ENCODE measurements at regions of chr9 and their contacts with region 1.

Region 1: DNA sequence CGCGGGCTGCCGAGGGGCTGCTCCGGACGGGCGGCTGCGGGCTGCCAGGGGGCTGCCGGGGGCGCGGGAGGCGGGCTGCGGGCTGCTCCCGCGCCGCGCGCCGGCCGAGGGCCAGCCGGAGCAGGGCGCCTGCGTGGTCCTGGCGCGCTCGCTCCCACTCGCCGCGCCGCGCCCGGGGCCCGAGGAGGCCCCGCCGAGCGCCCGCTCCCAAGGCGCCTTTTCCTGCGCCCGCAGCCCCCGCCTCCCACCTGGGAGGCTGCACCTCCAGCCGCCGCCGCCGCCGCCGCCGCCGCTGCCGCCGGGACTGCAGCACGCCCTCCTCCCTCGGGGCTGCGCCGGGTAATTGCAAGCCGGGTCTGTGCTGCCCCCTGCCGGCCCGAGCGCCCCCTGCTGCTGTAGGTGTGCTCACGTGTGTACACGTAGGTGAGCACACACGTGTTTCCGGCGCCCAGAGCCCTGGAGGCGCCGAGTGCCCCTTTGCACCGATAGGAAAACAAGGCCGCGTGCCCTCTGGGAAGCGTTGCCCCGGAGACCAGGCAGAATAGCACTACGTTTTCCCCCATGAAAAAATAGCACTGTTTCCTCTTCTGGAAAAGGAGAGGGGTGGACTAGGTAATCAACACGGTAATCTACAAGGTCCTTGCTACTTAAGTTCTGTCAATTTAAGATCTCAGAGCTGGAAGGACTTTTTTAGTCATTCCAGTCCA is at the start of gene EPB41L4B:
- DNase-seq: peak; percentile 88
- H3K4me3 Mint-ChIP-seq: peak within 1 kb of the TSS; percentile 84
- H3K27ac Mint-ChIP-seq: peak within 1 kb of the TSS; percentile 67
- H3K4me1 Mint-ChIP-seq: peaks cover 41% of the 10 kb centered on the region
- H3K27me3 Mint-ChIP-seq: no peaks in the 10 kb centered on the region
- CTCF ChIP-seq: peak; percentile 96
- total RNA-seq, gene EPB41L4B: 20.2 and 23.7 TPM in 2 replicates

Region 2: DNA sequence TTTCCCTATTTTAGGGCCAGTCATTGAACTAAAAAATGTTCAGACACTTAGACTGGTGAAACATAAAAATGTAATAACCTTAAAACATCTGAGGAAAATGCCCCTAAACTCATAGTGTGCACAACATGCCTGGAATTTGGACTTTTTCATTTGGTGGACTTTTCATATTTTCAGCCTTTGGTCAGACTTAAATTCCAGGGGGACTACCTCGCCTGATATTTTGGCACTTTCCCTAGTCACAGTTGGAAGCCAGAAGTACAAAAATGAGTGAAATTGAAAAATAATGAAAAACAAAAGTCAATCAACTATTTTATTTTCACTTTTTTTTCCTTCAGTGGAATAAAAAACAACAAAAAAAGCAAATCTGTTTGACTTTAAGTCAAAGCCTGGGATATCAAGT is 721.3 kb before region 1 on chr9:
- CTCF ChIA-PET with region 1: no interaction called
- POLR2A ChIA-PET with region 1: no interaction called
- intact Hi-C with region 1: no loop called
- DNase-seq: no peak
- H3K4me3 Mint-ChIP-seq: no peak overlapping the region
- H3K27ac Mint-ChIP-seq: no peak overlapping the region
- H3K4me1 Mint-ChIP-seq: peaks cover 10% of the 10 kb centered on the region
- H3K27me3 Mint-ChIP-seq: no peaks in the 10 kb centered on the region
- CTCF ChIP-seq: no peak

Region 3: DNA sequence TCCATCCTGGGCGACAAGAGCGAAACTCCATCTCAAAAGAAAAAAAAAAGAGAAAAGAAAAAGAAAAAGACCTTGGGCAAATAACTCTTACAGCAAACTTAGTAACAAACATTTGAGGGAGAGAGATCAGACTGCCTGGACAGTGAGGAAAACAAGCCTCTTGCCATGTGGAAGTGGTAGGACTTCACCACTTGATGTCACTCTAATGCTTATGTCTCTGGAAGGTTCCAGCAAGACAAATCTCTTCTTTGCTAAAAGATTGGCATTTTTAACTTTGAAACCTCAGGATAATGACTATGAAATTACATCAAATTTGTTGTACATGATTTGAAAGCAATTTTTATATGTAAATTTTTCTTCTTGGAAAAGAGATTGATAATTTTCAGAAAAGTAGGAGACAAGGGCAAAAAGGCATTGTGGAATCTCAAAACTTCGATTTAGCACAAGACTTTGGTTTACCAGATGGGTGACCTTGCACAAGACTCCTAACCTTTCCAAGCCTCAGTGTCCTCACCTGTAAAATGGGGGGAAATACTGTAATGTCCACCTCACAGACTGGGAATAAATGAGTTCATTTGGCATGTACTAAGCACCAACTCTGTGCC is 470.5 kb before region 1 on chr9:
- CTCF ChIA-PET with region 1: no interaction called
- POLR2A ChIA-PET with region 1: no interaction called
- intact Hi-C with region 1: loop called (anchors 10 kb)
- DNase-seq: peak; percentile 60
- H3K4me3 Mint-ChIP-seq: no peak overlapping the region
- H3K27ac Mint-ChIP-seq: no peak overlapping the region
- H3K4me1 Mint-ChIP-seq: no peaks in the 10 kb centered on the region
- H3K27me3 Mint-ChIP-seq: no peaks in the 10 kb centered on the region
- CTCF ChIP-seq: peak; percentile 52

Region 4: DNA sequence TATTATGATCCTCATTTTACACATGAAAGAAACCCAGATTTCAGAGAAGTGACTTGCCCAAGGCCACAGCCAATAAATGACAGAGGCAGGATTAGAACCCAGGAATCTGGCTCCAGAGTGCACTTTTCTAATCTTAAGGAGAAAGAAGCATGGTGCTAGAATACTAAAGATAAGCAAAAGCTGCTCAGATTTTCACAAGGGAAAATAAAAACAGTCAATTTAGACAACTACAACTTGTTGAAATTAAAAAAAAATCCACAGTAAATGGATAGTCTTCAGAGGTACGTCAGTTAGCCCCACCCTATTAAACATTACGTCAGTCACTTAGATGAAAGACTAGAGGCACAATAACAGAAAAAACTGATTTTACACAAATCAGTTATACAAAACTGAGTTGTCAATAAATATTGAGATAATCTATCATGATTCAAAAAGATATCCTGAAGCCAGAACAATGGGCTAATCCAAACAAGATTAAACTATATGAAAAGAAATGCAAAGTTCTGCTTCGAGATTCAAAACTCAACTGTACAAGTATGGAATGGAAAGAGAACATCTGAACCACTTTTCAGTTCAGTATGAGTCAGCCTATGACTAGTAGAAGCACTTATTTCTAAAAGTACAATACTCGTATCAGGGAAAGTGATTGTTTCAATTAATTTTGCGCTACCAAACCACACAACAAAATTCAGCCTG is 210.4 kb before region 1 on chr9:
- CTCF ChIA-PET with region 1: interaction called, 4 read pairs
- POLR2A ChIA-PET with region 1: interaction called, 3 read pairs
- intact Hi-C with region 1: loop called (anchors 5 kb)
- DNase-seq: peak; percentile 61
- H3K4me3 Mint-ChIP-seq: peak overlapping the region; percentile 59
- H3K27ac Mint-ChIP-seq: peak overlapping the region; percentile 95
- H3K4me1 Mint-ChIP-seq: peaks cover 54% of the 10 kb centered on the region
- H3K27me3 Mint-ChIP-seq: no peaks in the 10 kb centered on the region
- CTCF ChIP-seq: no peak

Region 5: GRCh38 chr9:109192732-109193361 is 128.0 kb before region 1 on chr9:
- CTCF ChIA-PET with region 1: interaction called, 3 read pairs
- POLR2A ChIA-PET with region 1: interaction called, 3 read pairs
- intact Hi-C with region 1: loop called (anchors 1 kb)
- DNase-seq: peak; percentile 63
- H3K4me3 Mint-ChIP-seq: no peak overlapping the region
- H3K27ac Mint-ChIP-seq: no peak overlapping the region
- H3K4me1 Mint-ChIP-seq: no peaks in the 10 kb centered on the region
- H3K27me3 Mint-ChIP-seq: no peaks in the 10 kb centered on the region
- CTCF ChIP-seq: peak; percentile 46

Region 6: DNA sequence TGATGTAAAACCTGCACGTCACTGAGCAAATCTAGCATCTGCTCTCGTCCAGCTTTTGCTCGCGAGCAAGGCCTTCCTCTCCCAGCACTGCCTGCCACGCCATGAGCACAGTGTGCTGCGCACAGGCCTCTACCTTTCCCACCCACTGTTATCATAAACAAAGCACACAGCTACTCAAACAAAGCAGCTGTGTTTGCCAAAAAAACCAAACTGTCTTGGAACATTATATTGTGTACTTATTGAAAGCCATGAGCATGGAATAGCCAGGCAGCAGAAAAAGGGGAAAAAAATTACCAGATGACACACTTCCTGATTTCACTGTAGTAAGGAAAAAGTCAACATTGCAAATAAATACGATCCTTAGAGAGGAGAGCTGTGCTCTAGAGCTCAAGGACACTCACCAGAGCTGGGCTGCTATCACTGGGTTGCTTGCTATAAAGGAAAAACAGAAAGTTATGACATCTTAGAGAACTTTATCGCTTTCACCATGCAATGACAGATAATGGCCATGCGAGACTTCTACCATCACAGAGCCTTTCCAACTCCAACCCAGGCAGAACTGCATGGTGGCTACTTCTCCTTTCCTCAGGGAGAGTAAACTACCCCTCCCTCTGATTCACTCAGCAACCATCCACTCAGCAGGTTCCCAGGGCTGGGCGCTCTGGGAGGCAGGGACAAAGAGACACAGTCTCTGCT is 69.7 kb before region 1 on chr9:
- CTCF ChIA-PET with region 1: interaction called, 6 read pairs
- POLR2A ChIA-PET with region 1: interaction called, 20 read pairs
- intact Hi-C with region 1: loop called (anchors 2 kb)
- DNase-seq: peak; percentile 84
- H3K4me3 Mint-ChIP-seq: peak overlapping the region; percentile 59
- H3K27ac Mint-ChIP-seq: peak overlapping the region; percentile 96
- H3K4me1 Mint-ChIP-seq: peaks cover 50% of the 10 kb centered on the region
- H3K27me3 Mint-ChIP-seq: no peaks in the 10 kb centered on the region
- CTCF ChIP-seq: no peak

Region 7: DNA sequence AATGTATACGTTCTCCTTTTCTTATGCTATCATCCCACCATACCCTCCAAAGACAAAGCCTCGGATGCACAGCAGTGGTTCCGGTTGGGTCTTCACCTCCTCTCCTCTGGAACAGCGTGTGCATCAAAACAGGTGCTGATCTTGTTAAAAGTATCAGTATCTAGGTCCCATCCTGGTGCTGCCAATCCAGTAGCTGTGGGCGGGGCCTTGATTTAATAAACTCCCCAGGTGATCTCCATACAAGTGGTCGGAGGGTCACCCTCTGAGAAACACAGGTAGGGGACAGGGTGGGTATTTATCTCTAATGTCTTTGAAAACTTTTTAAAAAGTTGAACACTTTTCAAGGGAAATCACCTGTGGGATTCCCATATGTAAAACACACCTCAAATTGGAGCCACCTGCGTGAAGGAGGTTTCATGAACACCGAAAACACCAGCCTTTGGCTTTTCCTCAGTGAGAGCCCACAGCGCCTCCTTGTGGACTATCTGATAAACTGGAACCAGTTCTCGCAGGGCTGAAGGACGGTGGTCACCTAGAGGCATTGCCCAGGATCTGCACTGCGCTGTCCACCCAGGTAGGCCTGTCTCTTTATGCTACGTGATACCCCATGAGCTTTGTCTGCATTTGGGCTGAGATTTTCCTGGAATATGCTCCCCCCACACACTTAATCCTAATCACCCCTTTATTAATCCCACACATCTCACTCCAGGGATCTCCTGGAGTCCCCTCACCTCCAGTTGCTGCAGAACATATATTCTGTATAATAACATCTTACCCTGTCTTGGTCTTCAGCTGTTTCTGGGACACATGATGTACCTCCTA is 80.5 kb after region 1 on chr9:
- CTCF ChIA-PET with region 1: no interaction called
- POLR2A ChIA-PET with region 1: no interaction called
- intact Hi-C with region 1: loop called (anchors 2 kb)
- DNase-seq: peak; percentile 77
- H3K4me3 Mint-ChIP-seq: no peak overlapping the region
- H3K27ac Mint-ChIP-seq: peak overlapping the region; percentile 85
- H3K4me1 Mint-ChIP-seq: no peaks in the 10 kb centered on the region
- H3K27me3 Mint-ChIP-seq: no peaks in the 10 kb centered on the region
- CTCF ChIP-seq: peak; percentile 83

Region 8: GRCh38 chr9:109918339-109919163 is 597.7 kb after region 1 on chr9:
- CTCF ChIA-PET with region 1: no interaction called
- POLR2A ChIA-PET with region 1: no interaction called
- intact Hi-C with region 1: no loop called
- DNase-seq: no peak
- H3K4me3 Mint-ChIP-seq: no peak overlapping the region
- H3K27ac Mint-ChIP-seq: no peak overlapping the region
- H3K4me1 Mint-ChIP-seq: peaks cover 12% of the 10 kb centered on the region
- H3K27me3 Mint-ChIP-seq: no peaks in the 10 kb centered on the region
- CTCF ChIP-seq: no peak